HEK293 (cell line): ENCODE measurements at regions of chr4 and their contacts with region 1.

Region 1: GRCh38 chr4:81351654-81352445 is 119.9 kb downstream of the RASGEF1B start:
- H3K4me3 ChIP-seq: no peak overlapping the region
- H3K27ac ChIP-seq: no peak overlapping the region
- H3K4me1 ChIP-seq: no peaks in the 10 kb centered on the region
- CTCF ChIP-seq: peak; percentile 30; the same call in 1 of the 2 replicates

Region 2: DNA sequence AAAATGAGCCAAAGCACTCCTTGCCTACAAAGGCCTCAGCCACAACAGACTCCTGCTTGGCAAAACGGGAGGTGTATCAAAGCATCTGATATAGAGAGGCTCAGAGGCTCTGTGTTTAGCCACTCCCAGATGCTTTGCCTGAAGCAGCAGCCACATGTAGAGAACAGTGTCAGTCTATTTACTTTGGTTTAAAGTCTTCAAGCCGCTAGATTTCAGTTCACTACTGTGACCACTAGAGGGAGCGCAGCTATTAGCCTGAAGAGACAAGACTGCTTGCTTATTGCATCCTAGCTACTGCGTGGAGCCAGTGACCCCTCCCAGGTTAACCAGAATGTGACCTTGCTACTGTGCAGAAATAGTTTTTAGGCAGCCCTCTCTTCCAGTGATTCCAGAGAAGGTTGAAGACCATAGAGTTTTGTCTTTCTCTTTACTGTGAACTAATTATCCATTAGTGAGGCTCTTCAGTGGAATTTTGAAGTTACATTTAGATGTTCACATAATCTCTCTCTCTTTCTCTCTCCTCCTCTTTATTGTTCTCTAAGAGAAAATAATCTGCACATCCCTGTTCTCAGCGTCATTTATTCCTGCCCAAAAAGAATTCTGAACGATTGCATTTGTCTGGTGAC is 282.0 kb before region 1 on chr4:
- CTCF ChIA-PET with region 1: interaction called, 61 read pairs
- POLR2A ChIA-PET with region 1: no interaction called
- H3K4me3 ChIP-seq: no peak overlapping the region
- H3K27ac ChIP-seq: no peak overlapping the region
- H3K4me1 ChIP-seq: no peaks in the 10 kb centered on the region
- CTCF ChIP-seq: no peak